HCT116 (cell line): ENCODE measurements at regions of chr16 and their contacts with region 1.

Region 1: DNA sequence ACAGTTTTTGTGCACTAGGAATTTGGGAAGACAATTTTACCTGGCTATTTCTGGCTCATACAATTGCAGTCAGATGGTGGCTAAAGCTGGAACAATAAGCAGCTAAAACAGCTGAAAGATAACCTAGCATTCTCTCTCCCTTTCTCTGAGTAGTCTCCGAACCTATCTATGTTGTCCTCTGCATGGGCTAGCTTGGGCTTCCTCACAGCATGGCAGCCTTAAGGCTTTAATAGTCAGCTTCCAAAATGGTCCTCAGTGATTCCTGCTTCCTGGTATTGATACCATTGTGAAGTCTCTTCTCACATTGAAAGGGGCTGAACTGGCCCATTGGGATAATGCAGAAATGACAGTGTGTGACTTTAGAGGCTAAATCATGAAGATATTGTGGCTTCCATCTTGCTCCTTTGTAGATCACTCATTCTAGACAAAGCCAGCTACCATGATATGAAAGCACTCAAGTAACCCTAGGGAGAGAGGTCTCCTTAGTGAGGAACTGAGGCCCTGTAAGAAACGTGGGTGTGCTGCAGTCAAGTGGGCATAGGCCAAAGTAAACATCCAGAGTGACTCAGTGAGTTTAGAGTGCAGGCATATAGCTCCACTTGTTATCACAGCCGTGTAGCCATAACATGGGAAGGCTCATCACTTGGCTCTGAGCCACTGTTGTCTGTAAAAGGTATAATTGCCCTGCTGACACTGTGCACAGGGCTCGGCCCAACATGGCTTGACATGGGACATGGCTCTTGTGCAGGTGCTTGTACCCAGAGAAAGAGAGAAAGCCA is 5.5 kb upstream of the VKORC1 start:
- DNase-seq: no peak
- ATAC-seq: no peak
- H3K4me3 ChIP-seq: no peak overlapping the region
- H3K27ac ChIP-seq: no peak overlapping the region
- H3K4me1 ChIP-seq: peaks cover 15 to 23% of the 10 kb centered on the region in 2 experiments
- H3K27me3 ChIP-seq: no peaks in the 10 kb centered on the region
- CTCF ChIP-seq: no peak
- POLR2A ChIP-seq: no peak
- RAD21 ChIP-seq: no peak

Region 2: GRCh38 chr16:30902029-30902972 is 197.7 kb before region 1 on chr16:
- CTCF ChIA-PET with region 1: no interaction called
- POLR2A ChIA-PET with region 1: no interaction called
- RAD21 ChIA-PET with region 1: no interaction called
- intact Hi-C with region 1: no loop called
- DNase-seq: no peak
- ATAC-seq: peak; percentile 88
- H3K4me3 ChIP-seq: peak overlapping the region; percentile 37 to 60
- H3K27ac ChIP-seq: peak overlapping the region; percentile 89
- H3K4me1 ChIP-seq: peaks cover 16 to 37% of the 10 kb centered on the region in 2 experiments; a peak in 3 of 4 replicates
- H3K27me3 ChIP-seq: no peaks in the 10 kb centered on the region
- CTCF ChIP-seq: 0 out of 6 replicates have a peak, but pooled peaks of 1 of the 3 experiments have one; percentile 1
- POLR2A ChIP-seq: no peak
- RAD21 ChIP-seq: no peak

Region 3: DNA sequence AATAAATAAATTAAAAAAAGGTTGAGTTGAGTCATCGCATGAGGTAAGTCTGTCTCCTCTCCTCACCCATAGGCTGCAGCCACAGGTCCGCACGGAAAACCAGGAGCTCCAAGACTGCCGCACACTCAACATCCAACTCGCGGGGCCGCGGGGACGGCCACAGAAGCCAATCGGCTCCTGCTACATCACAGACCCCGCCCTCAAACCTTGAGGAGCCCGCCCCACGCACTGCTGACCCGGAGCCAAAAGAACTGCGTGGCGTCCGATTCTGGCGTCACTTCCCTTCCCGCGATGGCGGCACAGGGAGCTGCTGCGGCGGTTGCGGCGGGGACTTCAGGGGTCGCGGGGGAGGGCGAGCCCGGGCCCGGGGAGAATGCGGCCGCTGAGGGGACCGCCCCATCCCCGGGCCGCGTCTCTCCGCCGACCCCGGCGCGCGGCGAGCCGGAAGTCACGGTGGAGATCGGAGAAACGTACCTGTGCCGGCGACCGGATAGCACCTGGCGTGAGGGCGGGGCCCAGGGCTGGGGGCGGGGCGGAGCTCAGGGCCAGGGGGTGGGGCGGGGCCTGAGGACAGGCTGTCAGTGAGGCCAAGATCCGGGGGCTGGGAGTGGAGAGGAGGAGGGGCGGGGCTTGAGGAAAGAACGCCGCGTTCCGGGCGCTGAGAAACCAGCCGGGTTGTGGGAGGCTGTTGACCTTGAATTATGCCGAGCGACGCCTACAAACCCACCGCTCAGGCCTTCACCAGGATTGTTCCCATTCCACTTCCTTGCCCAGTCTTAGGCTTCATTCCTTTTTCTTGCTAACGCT is 17.5 kb after region 1 on chr16 and contains the start of gene KAT8:
- CTCF ChIA-PET with region 1: interaction called, 7 read pairs
- POLR2A ChIA-PET with region 1: interaction called, 17 read pairs
- RAD21 ChIA-PET with region 1: interaction called in 1 of 2 experiments, 3 read pairs
- intact Hi-C with region 1: no loop called
- DNase-seq: peak; percentile 97
- ATAC-seq: peak; percentile 92
- H3K4me3 ChIP-seq: peak within 1 kb of the TSS; percentile 70 to 82
- H3K27ac ChIP-seq: peak within 1 kb of the TSS; percentile 80
- H3K4me1 ChIP-seq: peaks cover 7 to 30% of the 10 kb centered on the region in 2 experiments; a peak in 3 of 4 replicates
- H3K27me3 ChIP-seq: no peaks in the 10 kb centered on the region
- CTCF ChIP-seq: no peak
- POLR2A ChIP-seq: peak; percentile 56
- RAD21 ChIP-seq: no peak
- total RNA-seq, gene KAT8: 44.9 TPM